ENCODE measurements at regions of chr1 and their contacts with region 1.

Region 1: DNA sequence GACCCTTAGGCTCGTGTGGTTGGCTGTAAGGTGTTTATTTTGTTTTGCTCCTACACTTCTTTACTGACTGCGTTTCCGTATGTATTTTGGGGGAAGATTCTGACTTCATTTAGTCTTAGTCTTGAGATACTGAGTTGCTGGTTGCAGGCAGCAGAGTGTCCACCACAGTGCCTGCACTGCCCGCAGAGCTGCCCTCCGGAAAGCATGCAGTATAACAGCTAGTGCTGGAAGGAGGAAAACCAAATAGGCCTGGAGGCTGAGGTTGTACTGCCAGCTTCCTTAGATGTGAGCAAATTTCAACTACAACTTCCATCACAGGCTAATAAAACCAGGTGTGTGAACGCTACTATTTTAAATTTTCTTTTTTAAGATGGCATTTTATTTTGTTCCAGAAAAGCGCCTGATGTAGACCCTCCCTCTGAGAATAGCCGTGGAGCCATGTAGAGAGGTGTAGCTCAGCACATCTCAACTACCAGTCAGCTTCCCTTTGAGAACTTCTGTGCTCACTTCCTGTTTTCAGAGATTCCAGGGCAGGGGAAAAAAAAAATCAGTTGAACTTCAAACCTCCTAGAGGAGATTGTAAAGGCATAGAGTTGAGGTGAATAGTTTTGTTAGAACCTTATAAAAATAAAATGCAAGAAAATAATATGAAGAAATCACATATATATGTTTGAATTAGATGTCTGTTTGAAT is 17.6 kb downstream of the LMO4 start:
- DNase-seq: no peak
- H3K4me3 ChIP-seq: no peak overlapping the region
- CTCF ChIP-seq: no peak

Region 2: DNA sequence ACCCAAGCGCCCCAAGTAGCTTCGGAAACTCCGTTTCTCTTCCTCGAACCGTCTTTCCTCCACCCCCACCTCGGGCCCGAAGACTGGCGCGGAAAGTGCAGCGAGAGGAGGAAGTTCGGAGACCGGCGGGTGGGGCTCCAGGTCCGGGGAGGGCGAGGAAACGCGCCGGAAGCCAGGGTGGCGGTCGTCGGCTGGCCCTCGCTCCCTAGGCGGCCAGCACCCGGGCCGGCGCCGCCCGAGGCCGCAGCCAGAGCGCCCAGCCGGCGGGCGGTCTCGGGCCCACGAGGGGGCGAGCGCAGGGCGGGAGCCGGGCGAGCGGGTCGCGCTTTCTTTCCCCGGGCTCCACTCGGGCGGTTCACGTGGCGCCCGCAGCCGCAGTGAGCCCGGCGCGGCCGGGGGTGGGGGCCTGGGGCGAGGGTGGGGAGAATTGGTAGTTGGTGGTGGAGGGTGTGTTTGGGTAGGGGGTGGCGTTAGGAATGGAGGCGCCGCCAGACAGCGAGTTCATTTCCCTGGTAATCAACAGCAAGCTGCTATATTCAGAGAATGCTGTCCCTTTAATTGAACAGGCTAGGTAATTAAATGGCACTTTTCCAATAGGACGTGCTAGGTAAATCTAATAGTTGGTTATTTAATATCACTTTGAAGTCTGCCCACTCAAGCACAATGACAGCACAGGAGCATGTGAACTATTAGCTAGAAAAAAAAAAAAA is 10.9 kb before region 1 on chr1:
- CTCF ChIA-PET with region 1: interaction called, 17 read pairs
- POLR2A ChIA-PET with region 1: no interaction called
- DNase-seq: no peak
- H3K4me3 ChIP-seq: peak overlapping the region; percentile 71
- CTCF ChIP-seq: no peak

Region 3: DNA sequence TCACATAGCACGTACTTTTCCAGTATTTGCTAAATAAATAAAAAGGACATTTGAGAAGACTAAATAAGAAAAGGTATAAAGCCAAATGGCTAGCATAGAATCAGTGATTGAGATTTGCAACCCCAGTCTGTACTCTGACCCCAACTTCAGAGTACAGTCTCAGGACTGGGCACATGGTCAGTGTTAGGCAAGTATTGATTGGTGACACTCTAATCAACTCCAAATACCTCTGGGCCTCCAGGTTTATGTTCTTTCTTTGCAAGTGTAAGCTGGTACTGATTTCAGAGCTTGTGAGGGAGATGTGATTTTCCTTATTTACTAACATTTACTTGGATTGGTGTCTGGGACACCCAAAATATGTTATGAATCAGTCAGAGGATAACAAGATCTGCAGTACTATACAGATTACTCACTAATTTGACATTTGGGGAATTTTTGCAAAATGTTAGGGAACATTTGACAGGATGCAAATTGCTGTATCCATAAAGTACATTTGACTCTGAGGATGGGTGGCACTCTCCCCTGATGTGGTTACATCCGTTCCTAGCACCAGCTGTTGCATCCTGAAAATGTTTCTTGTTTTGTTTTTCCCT is 16.7 kb after region 1 on chr1:
- CTCF ChIA-PET with region 1: no interaction called
- POLR2A ChIA-PET with region 1: no interaction called
- DNase-seq: no peak
- H3K4me3 ChIP-seq: no peak overlapping the region
- CTCF ChIP-seq: no peak

Region 4: GRCh38 chr1:87418048-87418447 is 71.8 kb after region 1 on chr1:
- CTCF ChIA-PET with region 1: no interaction called
- POLR2A ChIA-PET with region 1: no interaction called
- DNase-seq: no peak
- H3K4me3 ChIP-seq: no peak overlapping the region
- CTCF ChIP-seq: no peak